ENCODE measurements at regions of chr1 and their contacts with region 1.

Region 1: DNA sequence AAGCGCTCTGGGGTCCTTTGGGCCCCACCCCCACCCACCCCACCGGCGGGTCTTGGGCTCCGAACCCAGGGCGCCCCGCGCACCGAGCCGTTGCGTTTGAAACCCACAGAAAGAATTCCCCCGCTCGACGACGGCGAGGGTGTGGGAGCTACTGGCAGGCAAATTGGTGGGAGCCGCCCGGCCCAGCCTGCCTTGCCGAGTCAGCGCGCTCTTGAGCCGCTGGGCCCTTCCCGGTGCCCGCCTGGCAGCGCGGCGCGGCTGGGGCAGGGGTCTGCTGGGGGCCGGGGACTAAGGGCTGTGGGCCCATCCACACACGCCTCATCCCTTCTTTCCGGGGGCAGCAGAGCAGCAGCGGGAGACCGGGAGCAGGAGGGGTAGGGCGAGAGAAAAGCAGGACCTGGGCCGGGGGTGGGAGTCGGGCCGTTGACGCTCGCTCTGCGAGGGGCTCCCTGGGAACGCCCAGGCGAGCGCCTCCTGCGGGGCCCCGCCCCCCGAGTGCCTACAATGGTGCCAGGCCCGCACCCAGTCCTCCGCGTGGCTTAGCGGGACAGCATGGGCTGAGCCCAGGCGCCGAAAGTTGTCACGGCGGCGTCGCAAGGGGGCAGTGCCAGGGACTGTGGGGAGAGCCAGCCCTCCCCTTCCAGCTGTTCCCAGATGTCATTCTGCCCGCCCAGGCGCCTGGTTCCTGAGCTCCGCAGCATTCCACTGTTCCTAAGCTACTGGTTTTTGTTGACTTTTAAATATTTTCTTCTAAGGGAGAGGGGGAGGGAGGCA is at the start of gene C1orf94:
- DNase-seq: peak; percentile 40
- H3K4me3 ChIP-seq: no peak within 1 kb of the TSS
- H3K27ac ChIP-seq: no peak within 1 kb of the TSS
- H3K4me1 ChIP-seq: no peaks in the 10 kb centered on the region
- H3K27me3 ChIP-seq: peaks cover 19% of the 10 kb centered on the region
- CTCF ChIP-seq: peak; percentile 18; the same call in 1 of the 2 replicates
- total RNA-seq, gene C1orf94: 0.34 and 0.72 TPM in 2 replicates

Region 2: GRCh38 chr1:33349778-33350610 is 827.0 kb before region 1 on chr1:
- CTCF ChIA-PET with region 1: interaction called, 10 read pairs
- POLR2A ChIA-PET with region 1: no interaction called
- intact Hi-C with region 1: no loop called
- DNase-seq: peak; percentile 92
- H3K4me3 ChIP-seq: peak overlapping the region; percentile 94
- H3K27ac ChIP-seq: peak overlapping the region; percentile 98
- H3K4me1 ChIP-seq: peaks cover 35% of the 10 kb centered on the region
- H3K27me3 ChIP-seq: no peaks in the 10 kb centered on the region
- CTCF ChIP-seq: no peak